ENCODE measurements at regions of chr15 and their contacts with region 1.

Region 1: DNA sequence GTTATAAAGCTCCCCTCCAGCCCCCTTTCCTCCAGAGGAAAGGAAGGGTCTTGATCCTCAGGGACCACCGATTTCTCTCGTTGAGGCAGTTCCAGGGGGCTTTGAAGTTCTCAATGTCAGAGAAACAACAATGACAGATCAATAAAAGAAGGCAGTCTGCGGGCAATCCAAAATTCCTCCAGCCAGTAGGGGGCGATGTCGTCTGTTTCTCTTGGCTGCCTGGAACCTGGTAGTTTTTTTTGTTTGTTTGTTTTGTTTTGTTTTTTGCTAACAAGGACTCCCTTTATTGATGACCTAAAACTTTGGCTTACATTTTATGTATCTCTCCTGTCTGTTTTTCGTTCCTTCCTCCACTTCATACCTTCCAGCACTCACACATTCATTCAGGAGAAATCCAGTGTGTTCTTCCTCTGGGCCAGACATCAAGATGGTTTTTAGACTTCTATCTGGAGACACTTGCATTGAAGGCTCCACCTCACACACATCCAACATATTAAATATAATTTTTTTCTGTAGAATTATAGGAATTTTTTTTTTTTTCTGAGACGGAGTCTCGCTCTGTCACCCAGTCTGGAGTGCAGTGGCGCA is 276.6 kb downstream of the RPLP1 start:
- DNase-seq: peak; percentile 55
- H3K4me3 Mint-ChIP-seq: no peak overlapping the region
- H3K27ac Mint-ChIP-seq: no peak overlapping the region
- H3K4me1 Mint-ChIP-seq: peaks cover 59% of the 10 kb centered on the region
- H3K27me3 Mint-ChIP-seq: peaks cover 14% of the 10 kb centered on the region

Region 2: GRCh38 chr15:69628371-69629093 is 100.7 kb before region 1 on chr15:
- intact Hi-C with region 1: no loop called
- DNase-seq: no peak
- H3K4me3 Mint-ChIP-seq: no peak overlapping the region
- H3K27ac Mint-ChIP-seq: no peak overlapping the region
- H3K4me1 Mint-ChIP-seq: no peaks in the 10 kb centered on the region
- H3K27me3 Mint-ChIP-seq: peaks cover 18% of the 10 kb centered on the region

Region 3: GRCh38 chr15:69712983-69713382 is 16.3 kb before region 1 on chr15:
- intact Hi-C with region 1: no loop called
- DNase-seq: no peak
- H3K4me3 Mint-ChIP-seq: no peak overlapping the region
- H3K27ac Mint-ChIP-seq: no peak overlapping the region
- H3K4me1 Mint-ChIP-seq: peaks cover 45% of the 10 kb centered on the region
- H3K27me3 Mint-ChIP-seq: peaks cover 23% of the 10 kb centered on the region

Region 4: DNA sequence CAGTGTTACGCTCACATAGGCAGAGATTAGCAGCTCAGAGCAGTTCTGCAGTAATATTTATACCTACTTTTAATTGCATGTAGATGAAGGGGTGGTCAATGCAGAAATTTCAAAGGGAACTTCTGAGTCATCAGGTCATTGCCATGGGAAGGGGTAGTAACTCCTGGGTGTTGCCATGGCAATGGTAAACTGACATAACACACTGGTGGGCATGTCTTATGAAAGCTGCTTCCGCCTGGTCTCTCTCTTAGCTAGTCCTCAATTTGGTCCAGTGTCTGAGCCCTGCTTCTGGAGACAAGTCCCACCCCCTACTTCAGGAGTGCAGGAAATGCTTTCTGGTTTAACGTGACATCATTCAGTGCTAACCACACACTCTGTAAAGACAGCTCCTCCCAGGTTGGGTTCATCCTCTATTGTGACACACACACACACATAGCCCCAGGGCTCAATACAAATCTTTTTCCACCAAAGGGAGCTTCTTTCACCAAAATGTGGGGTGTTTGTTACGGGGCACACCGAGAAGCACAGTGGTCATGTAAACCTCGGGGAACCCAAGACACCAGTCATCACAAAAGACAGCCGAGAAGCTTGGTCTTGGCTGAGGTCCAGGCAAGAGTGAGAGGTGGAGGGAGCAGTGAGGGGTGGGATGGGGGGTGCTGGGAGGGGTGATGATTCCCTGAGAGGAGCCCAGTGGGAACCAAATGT is 294.0 kb after region 1 on chr15:
- intact Hi-C with region 1: loop called (anchors 5 kb)
- DNase-seq: peak; percentile 64
- H3K4me3 Mint-ChIP-seq: peak overlapping the region; percentile 65
- H3K27ac Mint-ChIP-seq: peak overlapping the region; percentile 86
- H3K4me1 Mint-ChIP-seq: peaks cover 19% of the 10 kb centered on the region
- H3K27me3 Mint-ChIP-seq: peaks cover 21% of the 10 kb centered on the region

Region 5: DNA sequence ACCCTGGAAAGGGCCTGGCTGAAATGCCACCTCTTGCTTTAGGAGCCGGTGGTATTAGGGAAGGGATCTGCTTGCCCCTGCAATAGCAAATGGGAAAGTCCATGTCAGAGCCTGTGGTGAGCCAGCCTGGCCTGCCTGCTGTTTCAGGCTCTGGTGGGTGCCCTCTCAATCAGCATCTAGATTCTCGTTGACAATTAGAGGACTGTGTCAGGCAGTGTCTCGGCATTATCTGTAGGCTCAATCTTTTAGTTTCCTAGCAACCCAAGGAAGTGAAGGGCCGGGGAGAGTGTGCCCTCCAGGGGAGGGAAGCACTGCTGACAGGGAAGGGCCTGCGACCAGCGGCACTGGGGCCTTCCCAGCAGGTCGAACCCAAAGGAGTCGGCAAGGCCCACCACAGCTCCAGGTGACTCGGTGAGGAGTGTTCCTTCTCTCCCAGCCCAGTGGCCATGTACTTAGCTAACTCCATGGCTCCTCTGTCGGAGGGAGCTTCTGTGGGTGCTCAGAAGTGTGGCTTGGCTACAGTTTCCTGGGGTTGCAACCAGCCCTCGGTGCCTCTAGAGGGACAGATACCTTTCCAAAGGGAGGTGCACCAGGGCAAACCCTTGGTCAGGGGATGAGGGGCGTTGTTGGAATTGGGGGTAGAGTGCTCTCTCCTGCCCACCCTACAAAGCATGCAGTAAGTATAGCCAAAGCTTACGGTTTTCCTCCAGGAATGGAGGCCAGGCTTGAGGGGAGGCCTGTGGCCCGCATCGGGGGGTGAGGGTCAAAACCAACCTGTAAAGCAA is 326.5 kb after region 1 on chr15:
- intact Hi-C with region 1: no loop called
- DNase-seq: no peak
- H3K4me3 Mint-ChIP-seq: no peak overlapping the region
- H3K27ac Mint-ChIP-seq: no peak overlapping the region
- H3K4me1 Mint-ChIP-seq: no peaks in the 10 kb centered on the region
- H3K27me3 Mint-ChIP-seq: no peaks in the 10 kb centered on the region

Region 6: DNA sequence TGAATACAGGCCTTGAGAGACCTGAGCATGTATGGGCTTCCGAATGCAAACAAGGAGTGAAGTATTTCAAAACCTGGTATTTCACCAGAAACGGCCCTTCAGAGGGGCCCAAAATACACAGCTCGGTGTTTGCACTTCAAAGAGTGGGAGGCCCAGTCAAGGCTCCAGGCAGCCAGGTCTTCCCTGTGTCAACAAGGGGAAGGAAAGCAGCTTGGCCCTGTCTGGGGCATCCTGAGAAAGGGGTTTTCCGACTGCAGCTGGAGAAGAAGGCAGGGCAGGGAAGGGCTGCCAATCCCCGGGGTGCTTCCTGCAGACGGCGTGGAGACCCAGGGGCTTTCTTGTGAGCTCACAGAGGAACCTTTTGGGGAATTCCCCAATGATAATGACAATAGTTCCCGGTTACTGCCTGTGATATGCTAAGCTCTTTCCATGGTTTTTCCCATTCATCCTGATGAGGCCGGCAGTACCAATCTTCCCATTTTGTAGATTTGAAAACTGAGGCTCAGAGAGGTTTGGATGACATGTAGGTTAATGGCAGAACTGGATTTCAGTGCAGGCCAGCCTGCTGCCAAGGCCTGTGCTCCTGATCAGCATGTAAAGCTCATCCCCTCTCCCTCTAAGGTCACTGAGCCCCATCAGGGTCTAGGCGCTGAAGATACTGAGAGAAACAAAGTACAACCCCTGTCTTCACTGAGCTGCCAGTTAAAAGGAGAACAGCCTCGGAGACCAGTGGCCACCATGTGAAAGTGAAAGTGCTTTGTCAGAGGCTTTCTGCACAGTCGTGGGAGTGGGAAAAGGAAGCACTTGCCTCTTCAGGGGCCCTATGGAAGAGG is 411.5 kb after region 1 on chr15:
- intact Hi-C with region 1: loop called (anchors 5 kb)
- DNase-seq: peak; percentile 8
- H3K4me3 Mint-ChIP-seq: peak overlapping the region; percentile 54
- H3K27ac Mint-ChIP-seq: peak overlapping the region; percentile 53
- H3K4me1 Mint-ChIP-seq: peaks cover 33% of the 10 kb centered on the region
- H3K27me3 Mint-ChIP-seq: peaks cover 28% of the 10 kb centered on the region

Measured in activated T-helper 1 cell treated with anti-CD3 and anti-CD28 coated beads, Interleukin-12 subunit alpha, Interleukin-12 subunit beta, Interleukin-2, Interleukin-4 antibody, amounts not matched to agents 30 ng/mL and 10 ng/mL and 1 ng/mL, durations not matched to agents 14 hours and 24 hours and 36 hours (primary cell).